ENCODE measurements at regions of chr12 and their contacts with region 1.

Region 1: DNA sequence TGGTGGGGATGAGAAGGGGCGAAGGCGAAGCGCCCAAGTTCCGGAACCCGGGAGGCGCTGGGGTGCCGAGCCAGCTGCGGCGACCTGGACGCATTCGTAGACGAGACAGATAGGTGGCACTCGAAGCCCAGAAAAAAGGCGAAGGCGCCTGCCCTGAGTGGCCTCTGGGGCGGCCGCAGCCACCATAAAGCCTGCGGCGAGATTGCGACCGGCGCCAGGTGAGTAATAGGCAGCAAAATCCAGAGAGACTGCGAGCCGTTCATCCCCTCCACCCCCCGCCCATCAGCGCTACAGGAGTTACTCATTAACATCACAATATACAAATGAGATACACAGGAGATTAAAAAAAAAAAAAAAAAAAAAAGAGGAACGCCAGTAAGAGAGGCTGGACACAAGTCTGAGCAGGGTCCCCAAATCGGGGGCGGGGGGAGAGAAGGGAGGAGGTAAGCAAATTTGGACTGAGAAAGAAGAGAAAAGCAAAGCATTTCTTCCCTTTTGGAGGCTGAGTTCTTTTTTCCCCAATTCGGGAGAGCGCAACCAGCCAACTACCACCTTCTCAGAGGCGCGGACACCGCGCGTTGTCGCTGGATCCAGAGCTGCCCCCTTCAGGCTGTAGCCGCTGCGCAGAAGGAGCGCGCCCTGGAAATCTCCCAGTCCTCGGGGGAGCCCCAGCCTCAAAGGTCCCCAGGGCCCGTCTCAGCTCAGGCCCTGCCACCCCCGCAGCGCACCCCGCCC is 15.7 kb downstream of the TBX3 start:
- DNase-seq: peak; percentile 43
- H3K4me3 Mint-ChIP-seq: no peak overlapping the region
- H3K27ac Mint-ChIP-seq: no peak overlapping the region
- H3K4me1 Mint-ChIP-seq: peaks cover 17% of the 10 kb centered on the region
- H3K27me3 Mint-ChIP-seq: peaks cover 74% of the 10 kb centered on the region

Region 2: GRCh38 chr12:114152890-114153289 is 515.4 kb before region 1 on chr12:
- CTCF ChIA-PET with region 1: no interaction called
- intact Hi-C with region 1: no loop called
- DNase-seq: no peak
- H3K4me3 Mint-ChIP-seq: no peak overlapping the region
- H3K27ac Mint-ChIP-seq: no peak overlapping the region
- H3K4me1 Mint-ChIP-seq: no peaks in the 10 kb centered on the region
- H3K27me3 Mint-ChIP-seq: peaks cover 9% of the 10 kb centered on the region

Region 3: DNA sequence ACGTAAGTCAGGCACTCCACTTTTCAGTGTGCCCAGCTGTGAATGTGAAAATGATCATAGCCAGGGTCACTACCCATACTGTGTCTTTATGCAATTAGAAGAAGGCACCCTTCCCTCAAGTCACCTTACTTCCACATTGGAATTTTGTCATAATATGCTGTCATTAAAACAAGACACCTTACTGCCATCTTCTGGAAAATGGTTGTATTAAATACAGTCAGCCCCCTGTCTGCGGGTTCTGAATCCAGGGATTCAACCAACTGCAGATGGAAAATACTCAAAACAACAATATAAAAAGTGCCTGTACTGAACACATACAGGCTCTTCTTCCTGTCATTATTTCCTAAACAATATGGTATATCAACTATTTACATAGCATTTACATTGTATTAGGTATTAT is 192.2 kb before region 1 on chr12:
- CTCF ChIA-PET with region 1: no interaction called
- intact Hi-C with region 1: no loop called
- DNase-seq: no peak
- H3K4me3 Mint-ChIP-seq: no peak overlapping the region
- H3K27ac Mint-ChIP-seq: no peak overlapping the region
- H3K4me1 Mint-ChIP-seq: peaks cover 12% of the 10 kb centered on the region
- H3K27me3 Mint-ChIP-seq: peaks cover 48% of the 10 kb centered on the region

Region 4: DNA sequence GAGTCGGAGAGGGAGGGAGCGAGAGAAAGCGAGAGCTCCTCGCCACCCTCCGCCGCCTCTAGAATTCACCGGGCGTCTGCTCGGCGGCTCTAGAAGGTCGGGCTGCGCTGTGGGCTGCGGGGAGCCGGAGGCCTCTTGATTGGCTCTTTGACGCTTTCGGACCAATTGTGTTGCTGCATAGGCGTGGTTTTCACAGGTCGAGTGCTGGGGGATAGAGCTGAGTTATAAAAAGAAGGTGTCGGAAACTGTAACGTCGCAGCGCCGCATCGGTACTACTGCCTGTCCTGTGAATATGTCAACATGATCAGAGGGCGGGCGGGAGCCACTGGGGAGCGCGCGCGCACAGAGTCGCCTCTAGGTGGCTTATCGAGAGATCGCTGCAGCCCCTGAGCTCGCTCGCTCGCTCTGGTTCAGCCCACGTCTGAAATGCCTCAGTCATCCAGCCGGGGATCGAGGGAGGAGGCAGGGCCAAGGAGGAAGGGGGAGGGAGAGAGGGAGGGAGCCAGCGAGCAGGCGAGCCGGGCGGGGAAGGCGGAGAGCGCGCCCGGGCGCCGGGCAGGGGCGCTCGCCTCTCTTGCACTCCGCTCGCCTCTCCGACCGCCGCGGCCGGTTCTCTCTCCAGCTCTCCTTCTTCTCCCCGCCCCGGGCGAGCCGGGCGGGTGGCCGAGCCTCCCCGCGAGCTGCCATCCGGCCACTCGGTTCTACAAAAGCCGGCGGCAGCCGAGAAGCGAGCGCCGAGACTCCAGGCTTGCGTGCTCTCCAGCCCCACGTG is 16.0 kb after region 1 on chr12 and contains the start of gene TBX3:
- CTCF ChIA-PET with region 1: no interaction called
- intact Hi-C with region 1: loop called (anchors 2 kb)
- DNase-seq: peak; percentile 79
- H3K4me3 Mint-ChIP-seq: peak within 1 kb of the TSS; percentile 73
- H3K27ac Mint-ChIP-seq: no peak within 1 kb of the TSS
- H3K4me1 Mint-ChIP-seq: peaks cover 45% of the 10 kb centered on the region
- H3K27me3 Mint-ChIP-seq: peaks cover 91% of the 10 kb centered on the region
- total RNA-seq, gene TBX3: not detected

Region 5: GRCh38 chr12:115135800-115136211 is 467.5 kb after region 1 on chr12:
- CTCF ChIA-PET with region 1: no interaction called
- intact Hi-C with region 1: no loop called
- DNase-seq: no peak
- H3K4me3 Mint-ChIP-seq: no peak overlapping the region
- H3K27ac Mint-ChIP-seq: no peak overlapping the region
- H3K4me1 Mint-ChIP-seq: no peaks in the 10 kb centered on the region
- H3K27me3 Mint-ChIP-seq: peaks cover 7% of the 10 kb centered on the region

Measured in activated naive CD4-positive, alpha-beta T cell treated with anti-CD3 and anti-CD28 coated beads for 36 hours (primary cell).